SK-N-SH (cell line): ENCODE measurements at regions of chr7 and their contacts with region 1.

Region 1: DNA sequence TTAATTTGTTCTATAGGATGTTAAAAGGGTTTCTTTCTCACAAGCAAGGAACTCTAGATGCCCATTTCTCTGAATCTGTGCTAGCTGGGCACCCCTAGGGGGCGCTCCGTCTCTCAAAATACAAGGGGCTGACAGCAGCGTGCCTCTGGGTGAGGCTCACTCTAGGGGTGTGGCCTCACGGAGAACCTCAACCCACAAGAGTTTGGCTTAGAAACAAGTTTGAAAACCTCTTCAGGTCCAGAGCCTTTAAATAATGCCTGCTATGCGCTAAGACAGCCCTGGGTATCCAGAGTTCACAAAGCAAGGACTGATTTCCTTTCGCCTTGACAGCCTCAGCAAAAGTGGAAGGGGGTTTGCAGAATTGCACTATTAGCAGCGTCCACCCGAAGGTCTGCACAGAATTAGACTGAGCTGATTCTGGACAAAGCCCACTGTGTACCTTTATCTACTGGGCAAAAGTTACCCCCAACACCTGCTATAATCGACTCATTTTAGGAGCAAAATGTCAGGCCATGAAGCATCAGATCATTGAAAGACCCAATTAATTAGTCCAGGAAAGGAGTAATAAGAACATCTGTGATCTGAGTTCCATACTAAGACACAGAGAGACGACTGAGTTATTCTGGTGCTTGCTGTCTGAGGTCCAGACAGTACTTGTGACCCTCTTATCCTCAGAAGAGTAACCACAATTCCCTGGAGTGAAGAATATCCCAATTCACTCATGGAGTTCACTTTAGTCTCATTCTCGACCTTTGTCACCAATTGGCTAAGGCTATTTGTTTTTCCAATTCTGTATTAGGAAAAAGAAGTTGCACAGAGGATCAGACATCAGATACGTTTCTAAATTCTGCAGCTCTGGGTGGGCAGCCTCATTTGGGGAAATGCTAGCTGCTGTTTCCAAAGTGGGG is 574 bp upstream of the CPED1 start:
- DNase-seq: peak; percentile 84
- H3K4me3 ChIP-seq: peak overlapping the region; percentile 49 to 62
- H3K27ac ChIP-seq: peak overlapping the region; percentile 70 to 73; a peak in 3 of 4 replicates
- H3K4me1 ChIP-seq: peaks cover 12 to 31% of the 10 kb centered on the region in 2 experiments; a peak in 3 of 4 replicates
- H3K27me3 ChIP-seq: no peaks in the 10 kb centered on the region
- CTCF ChIP-seq: peak; percentile 100
- EP300 ChIP-seq: 0 out of 4 replicates have a peak, but pooled peaks of 1 of the 2 experiments have one; percentile 36
- RAD21 ChIP-seq: peak; percentile 98

Region 2: GRCh38 chr7:120805636-120806388 is 182.1 kb before region 1 on chr7:
- CTCF ChIA-PET with region 1: interaction called, 11 read pairs
- POLR2A ChIA-PET with region 1: no interaction called
- DNase-seq: peak; percentile 59
- H3K4me3 ChIP-seq: no peak overlapping the region; a peak in 1 of 4 replicates
- H3K27ac ChIP-seq: no peak overlapping the region
- H3K4me1 ChIP-seq: no peaks in the 10 kb centered on the region
- H3K27me3 ChIP-seq: peaks cover 9% of the 10 kb centered on the region; the same call in 1 of the 2 replicates
- CTCF ChIP-seq: peak; percentile 99
- EP300 ChIP-seq: no peak
- RAD21 ChIP-seq: peak; percentile 83

Region 3: DNA sequence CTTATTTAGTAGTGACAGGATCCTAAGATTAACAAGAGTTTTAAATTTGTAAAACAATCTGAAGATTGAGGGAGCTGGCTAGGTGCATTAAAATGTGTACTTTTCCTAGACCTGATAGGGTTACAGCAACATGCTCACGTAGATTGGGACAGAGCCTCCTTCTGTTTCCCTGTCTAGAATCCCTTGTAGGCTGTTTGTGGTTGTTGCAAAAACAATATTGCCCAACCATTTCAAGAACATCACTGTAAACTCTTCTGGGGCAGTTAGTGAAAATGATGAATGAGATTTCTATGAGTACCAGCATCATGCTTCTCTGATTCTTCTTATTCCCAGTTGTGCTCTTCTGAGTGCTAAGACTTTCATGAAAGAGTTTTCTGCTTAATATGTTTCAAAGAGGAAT is 14.1 kb before region 1 on chr7:
- CTCF ChIA-PET with region 1: interaction called, 41 read pairs
- POLR2A ChIA-PET with region 1: no interaction called
- DNase-seq: no peak
- H3K4me3 ChIP-seq: no peak overlapping the region
- H3K27ac ChIP-seq: no peak overlapping the region
- H3K4me1 ChIP-seq: no peaks in the 10 kb centered on the region
- H3K27me3 ChIP-seq: no peaks in the 10 kb centered on the region
- CTCF ChIP-seq: no peak
- EP300 ChIP-seq: no peak
- RAD21 ChIP-seq: no peak

Region 4: DNA sequence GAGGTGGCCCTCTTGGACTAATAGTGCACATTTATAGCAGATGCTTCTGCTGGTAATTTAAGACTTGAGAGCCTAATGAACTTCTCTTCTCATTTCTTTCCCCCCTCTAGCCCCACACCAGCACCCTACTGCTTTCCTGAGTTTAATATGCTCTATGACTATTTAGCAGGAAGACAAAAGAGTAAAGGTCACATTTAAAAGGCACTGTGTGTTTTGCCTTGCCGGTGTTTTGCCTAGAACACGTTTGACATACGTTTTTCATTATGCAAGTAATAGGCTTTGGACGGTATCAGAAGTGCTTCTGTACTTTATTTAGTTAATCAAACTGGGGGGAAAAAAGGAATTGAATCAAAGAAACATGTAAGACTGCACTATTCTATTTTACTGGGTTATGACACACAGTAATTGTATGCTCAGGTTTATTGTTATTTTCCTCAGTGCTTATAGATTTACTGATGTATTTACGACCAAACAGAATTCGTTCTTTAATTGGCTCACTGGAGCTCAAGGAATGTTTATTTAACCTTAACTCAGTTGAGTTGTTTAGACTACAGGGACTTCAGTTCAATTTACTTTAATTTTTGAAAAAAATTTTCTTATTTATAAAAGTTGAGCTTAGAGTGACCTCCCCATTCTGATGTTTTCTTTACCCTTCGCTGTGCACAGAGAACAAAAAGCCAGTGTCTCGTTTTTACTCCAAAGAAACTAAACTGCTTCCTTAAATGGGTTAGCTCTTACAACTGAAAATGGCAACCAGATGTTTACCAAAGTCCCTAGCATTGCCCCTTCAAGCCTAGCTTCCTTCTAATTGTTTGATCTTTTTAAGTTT is 36.0 kb after region 1 on chr7:
- CTCF ChIA-PET with region 1: interaction called, 18 read pairs
- POLR2A ChIA-PET with region 1: interaction called, 4 read pairs
- DNase-seq: no peak
- H3K4me3 ChIP-seq: no peak overlapping the region
- H3K27ac ChIP-seq: peak overlapping the region; percentile 31 to 64; a peak in 3 of 4 replicates
- H3K4me1 ChIP-seq: peaks cover 8 to 21% of the 10 kb centered on the region in 2 experiments; a peak in 3 of 4 replicates
- H3K27me3 ChIP-seq: no peaks in the 10 kb centered on the region
- CTCF ChIP-seq: no peak
- EP300 ChIP-seq: peak in 1 of 2 experiments; percentile 41; a peak in 1 of 4 replicates
- RAD21 ChIP-seq: no peak

Region 5: GRCh38 chr7:121061677-121062582 is 74.0 kb after region 1 on chr7:
- CTCF ChIA-PET with region 1: interaction called, 15 read pairs
- POLR2A ChIA-PET with region 1: no interaction called
- DNase-seq: no peak
- H3K4me3 ChIP-seq: no peak overlapping the region
- H3K27ac ChIP-seq: no peak overlapping the region; a peak in 1 of 4 replicates
- H3K4me1 ChIP-seq: peaks cover 0 to 3% of the 10 kb centered on the region in 2 experiments; a peak in 2 of 4 replicates
- H3K27me3 ChIP-seq: no peaks in the 10 kb centered on the region
- CTCF ChIP-seq: no peak
- EP300 ChIP-seq: no peak
- RAD21 ChIP-seq: no peak

Region 6: DNA sequence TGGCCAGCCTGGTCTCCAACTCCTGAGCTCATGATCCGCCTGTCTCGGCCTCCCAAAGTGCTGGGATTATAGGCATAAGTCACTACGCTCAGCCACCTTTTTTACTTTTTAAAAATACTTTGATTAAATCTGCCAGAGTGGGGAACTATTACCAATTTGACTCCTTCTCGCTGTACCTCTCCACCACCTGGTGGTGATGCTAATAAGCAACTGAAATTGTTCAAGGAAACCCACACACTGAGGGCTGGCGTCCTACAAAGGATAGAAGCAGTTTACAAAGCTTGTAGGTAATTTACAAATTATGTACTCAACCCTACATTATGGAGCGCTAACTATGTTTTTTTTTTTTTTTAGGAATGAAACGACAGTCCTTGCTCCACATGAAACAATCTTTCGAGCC is 111.6 kb after region 1 on chr7:
- CTCF ChIA-PET with region 1: interaction called, 30 read pairs
- POLR2A ChIA-PET with region 1: no interaction called
- DNase-seq: no peak
- H3K4me3 ChIP-seq: no peak overlapping the region
- H3K27ac ChIP-seq: no peak overlapping the region
- H3K4me1 ChIP-seq: peaks cover 0 to 3% of the 10 kb centered on the region in 2 experiments; a peak in 2 of 4 replicates
- H3K27me3 ChIP-seq: no peaks in the 10 kb centered on the region
- CTCF ChIP-seq: peak; percentile 34; the same call in 1 of the 2 replicates
- EP300 ChIP-seq: no peak
- RAD21 ChIP-seq: peak; percentile 12; the same call in 1 of the 2 replicates